Dorsolateral prefrontal cortex (tissue), 120 donors: ENCODE measurements at regions of chr9 and their contacts with region 1.

Region 1: DNA sequence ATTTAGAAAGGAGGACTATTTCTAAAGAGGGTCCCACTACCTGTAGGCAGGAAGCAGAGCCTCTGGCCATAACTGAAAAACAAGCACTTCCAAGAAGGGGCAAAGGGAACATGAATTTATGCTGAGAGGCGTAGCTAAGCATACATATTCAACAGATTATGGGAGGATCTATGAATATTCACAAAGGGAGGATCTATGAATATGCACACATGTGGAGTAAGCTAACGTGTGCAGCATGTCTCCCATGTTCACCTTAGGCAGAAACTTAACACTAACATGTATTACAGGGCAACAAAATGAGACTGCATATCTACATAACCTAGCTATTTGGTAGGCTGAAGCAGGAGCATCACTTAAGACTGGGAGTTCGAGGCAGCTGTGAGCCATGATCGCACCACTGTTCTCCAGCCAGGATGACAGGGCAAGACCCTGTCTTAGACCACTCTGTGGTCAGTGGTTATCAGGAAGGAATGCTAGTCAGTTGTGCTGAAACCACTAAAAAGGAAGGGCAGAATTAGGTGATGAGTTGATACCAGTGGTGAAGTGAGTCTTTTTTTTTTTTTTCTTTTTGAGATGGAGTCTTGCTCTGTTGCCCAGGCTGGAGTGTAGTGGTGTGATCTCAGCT is 20.8 kb downstream of the FXN start:
- DNase-seq: no peak
- H3K4me3 ChIP-seq: no peak overlapping the region
- H3K27ac ChIP-seq: no peak overlapping the region
- H3K27me3 ChIP-seq: no peaks in the 10 kb centered on the region
- CTCF ChIP-seq: no peak

Region 2: GRCh38 chr9:68966496-68966944 is 89.8 kb before region 1 on chr9:
- intact Hi-C with region 1: no loop called
- DNase-seq: no peak
- H3K4me3 ChIP-seq: no peak overlapping the region
- H3K27ac ChIP-seq: no peak overlapping the region
- H3K27me3 ChIP-seq: no peaks in the 10 kb centered on the region
- CTCF ChIP-seq: no peak

Region 3: DNA sequence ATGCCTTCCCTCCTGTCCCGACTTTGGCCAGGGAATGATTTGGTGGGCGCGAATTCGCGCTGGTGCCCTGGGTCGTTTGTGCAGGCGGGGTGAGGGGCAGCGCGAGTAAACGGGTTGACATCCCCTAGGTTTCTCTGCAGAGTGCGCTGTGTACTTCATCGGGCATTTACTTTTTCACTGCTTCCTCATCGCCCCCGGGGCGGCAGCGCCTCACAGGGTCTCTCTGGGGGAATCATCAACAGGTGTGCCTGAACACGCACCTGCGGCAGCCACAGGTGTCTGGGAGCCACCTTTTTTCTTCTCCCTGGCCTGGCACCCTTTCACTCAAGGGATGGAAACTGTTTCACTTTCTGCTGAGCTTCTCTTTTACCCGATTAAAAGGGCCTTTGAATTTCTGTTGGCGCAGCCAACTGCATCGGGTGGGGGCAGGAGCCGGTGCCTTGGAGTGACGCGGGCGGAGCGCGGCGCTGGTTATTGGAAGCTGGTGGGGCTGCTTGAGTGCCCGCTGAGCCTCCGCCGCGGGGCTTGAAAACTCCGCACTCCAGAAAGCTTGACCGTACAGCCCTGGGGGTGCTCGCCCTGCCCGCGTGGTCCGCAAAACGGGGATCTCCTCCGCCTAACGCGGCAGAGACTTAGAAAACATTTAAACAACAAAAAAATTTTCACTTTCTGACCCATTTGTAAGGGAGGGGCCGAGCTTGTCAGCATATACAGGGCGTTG is 65.7 kb after region 1 on chr9:
- intact Hi-C with region 1: loop called in 1 of 2 experiments (anchors 5 kb)
- DNase-seq: peak; percentile 50 to 85 (median 79)
- H3K4me3 ChIP-seq: peak overlapping the region; percentile 43 to 91 (median 81)
- H3K27ac ChIP-seq: peak overlapping the region; percentile 40 to 95 (median 87)
- H3K27me3 ChIP-seq: no peaks in the 10 kb centered on the region
- CTCF ChIP-seq: peak in 22 of 56 donors; percentile 7 to 42 (median 20)

Region 4: DNA sequence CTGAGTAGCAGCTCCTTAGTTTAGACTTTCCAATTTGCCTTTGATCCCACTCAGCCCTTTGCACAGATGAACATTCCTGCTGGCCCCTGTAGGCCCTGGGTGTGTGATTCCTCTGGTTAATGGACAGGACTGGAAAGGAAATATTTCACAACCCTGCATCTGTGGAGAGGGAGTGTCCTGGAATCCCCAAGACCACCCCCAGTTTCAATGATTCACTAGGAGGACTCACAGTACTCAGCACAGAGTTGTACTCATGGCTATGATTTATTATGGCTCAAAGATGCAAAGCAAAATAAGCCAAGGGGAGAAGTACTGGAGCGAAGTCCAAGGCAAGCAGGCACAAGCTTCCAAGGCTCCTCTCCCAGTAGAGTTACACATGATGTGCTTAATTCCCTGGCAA is 75.4 kb after region 1 on chr9:
- intact Hi-C with region 1: loop called in 1 of 2 experiments (anchors 5 kb)
- DNase-seq: no peak
- H3K4me3 ChIP-seq: no peak overlapping the region
- H3K27ac ChIP-seq: peak overlapping the region in 2 of 59 donors; percentile 32 to 41
- H3K27me3 ChIP-seq: no peaks in the 10 kb centered on the region
- CTCF ChIP-seq: no peak

Region 5: DNA sequence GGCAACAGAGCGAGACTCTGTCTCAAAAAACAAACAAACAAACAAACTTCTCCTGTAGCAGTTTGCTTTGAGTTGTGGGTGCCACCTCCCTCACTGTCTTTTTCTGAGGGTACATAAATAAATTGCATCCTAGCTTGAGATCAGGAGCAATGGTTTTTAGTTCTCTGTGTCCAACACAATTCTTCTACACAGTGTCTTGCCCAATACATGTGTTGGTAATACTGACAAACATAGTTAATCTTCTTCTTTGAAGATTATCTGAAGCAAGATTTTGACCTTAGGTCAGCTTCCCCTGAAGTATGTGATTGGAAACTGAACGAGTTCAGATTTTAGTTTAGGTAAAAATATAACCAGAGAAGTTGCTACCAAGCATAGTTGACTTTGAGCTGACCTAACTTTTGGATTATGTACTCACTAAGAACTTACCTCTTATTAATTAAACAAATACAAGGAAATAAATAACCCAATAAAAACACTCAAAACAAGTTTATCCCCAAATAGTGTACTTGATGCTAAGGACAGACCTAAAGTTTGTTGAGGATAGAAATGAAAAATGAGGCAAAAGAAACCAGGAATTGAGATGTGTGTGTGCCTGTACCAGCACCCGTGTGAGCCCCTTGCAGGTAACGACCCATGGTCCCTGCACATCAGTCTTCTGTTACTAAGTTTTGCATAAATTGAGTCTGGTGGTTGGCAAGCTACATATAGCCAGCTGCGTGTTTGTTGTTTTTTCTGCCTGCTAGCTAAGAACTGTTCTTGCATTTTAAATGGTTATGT is 134.0 kb after region 1 on chr9:
- intact Hi-C with region 1: loop called (anchors 1 to 2 kb)
- DNase-seq: no peak
- H3K4me3 ChIP-seq: no peak overlapping the region
- H3K27ac ChIP-seq: peak overlapping the region in 55 of 59 donors; percentile 6 to 99 (median 71)
- H3K27me3 ChIP-seq: no peaks in the 10 kb centered on the region
- CTCF ChIP-seq: no peak

Region 6: GRCh38 chr9:69385581-69386033 is 329.3 kb after region 1 on chr9:
- intact Hi-C with region 1: loop called in 1 of 2 experiments (anchors 10 kb)
- DNase-seq: no peak
- H3K4me3 ChIP-seq: no peak overlapping the region
- H3K27ac ChIP-seq: no peak overlapping the region
- H3K27me3 ChIP-seq: peaks cover 0 to 6% (median 0%) of the 10 kb centered on the region in 45 donors
- CTCF ChIP-seq: no peak

Region 7: GRCh38 chr9:69549310-69550202 is 493.3 kb after region 1 on chr9:
- intact Hi-C with region 1: loop called in 1 of 2 experiments (anchors 10 kb)
- DNase-seq: peak in 1 of 10 donors; percentile 22
- H3K4me3 ChIP-seq: peak overlapping the region in 8 of 59 donors; percentile 2 to 44 (median 15)
- H3K27ac ChIP-seq: peak overlapping the region in 27 of 59 donors; percentile 0 to 76 (median 44)
- H3K27me3 ChIP-seq: no peaks in the 10 kb centered on the region
- CTCF ChIP-seq: peak; percentile 66 to 98 (median 86)